ENCODE measurements at regions of chr6 and their contacts with region 1.

Region 1: GRCh38 chr6:8135276-8135675 is 32.9 kb upstream of the EEF1E1 start:
- DNase-seq: no peak
- H3K4me3 ChIP-seq: no peak overlapping the region
- H3K27ac ChIP-seq: no peak overlapping the region
- H3K4me1 ChIP-seq: no peaks in the 10 kb centered on the region
- H3K27me3 ChIP-seq: no peaks in the 10 kb centered on the region
- CTCF ChIP-seq: no peak

Region 2: GRCh38 chr6:8219352-8219943 is 84.2 kb after region 1 on chr6:
- intact Hi-C with region 1: loop called (anchors 2 kb)
- DNase-seq: peak in 1 of 2 donors; percentile 31
- H3K4me3 ChIP-seq: no peak overlapping the region
- H3K27ac ChIP-seq: no peak overlapping the region
- H3K4me1 ChIP-seq: peaks cover 0 to 10% (median 0%) of the 10 kb centered on the region in 4 donors
- H3K27me3 ChIP-seq: no peaks in the 10 kb centered on the region
- CTCF ChIP-seq: peak; percentile 67 to 82